ENCODE measurements at regions of chr22 and their contacts with region 1.

Region 1: GRCh38 chr22:45553351-45554039 is 50.8 kb downstream of the FBLN1 start:
- DNase-seq: no peak
- H3K4me3 ChIP-seq: no peak overlapping the region
- H3K27ac ChIP-seq: peak overlapping the region in 7 of 8 donors; percentile 41 to 80 (median 72)
- H3K4me1 ChIP-seq: peaks cover 5 to 41% (median 23%) of the 10 kb centered on the region in 6 donors
- H3K27me3 ChIP-seq: peaks cover 0 to 37% (median 0%) of the 10 kb centered on the region in 7 donors
- CTCF ChIP-seq: peak; percentile 52 to 86 (median 74)
- POLR2A ChIP-seq: no peak

Region 2: DNA sequence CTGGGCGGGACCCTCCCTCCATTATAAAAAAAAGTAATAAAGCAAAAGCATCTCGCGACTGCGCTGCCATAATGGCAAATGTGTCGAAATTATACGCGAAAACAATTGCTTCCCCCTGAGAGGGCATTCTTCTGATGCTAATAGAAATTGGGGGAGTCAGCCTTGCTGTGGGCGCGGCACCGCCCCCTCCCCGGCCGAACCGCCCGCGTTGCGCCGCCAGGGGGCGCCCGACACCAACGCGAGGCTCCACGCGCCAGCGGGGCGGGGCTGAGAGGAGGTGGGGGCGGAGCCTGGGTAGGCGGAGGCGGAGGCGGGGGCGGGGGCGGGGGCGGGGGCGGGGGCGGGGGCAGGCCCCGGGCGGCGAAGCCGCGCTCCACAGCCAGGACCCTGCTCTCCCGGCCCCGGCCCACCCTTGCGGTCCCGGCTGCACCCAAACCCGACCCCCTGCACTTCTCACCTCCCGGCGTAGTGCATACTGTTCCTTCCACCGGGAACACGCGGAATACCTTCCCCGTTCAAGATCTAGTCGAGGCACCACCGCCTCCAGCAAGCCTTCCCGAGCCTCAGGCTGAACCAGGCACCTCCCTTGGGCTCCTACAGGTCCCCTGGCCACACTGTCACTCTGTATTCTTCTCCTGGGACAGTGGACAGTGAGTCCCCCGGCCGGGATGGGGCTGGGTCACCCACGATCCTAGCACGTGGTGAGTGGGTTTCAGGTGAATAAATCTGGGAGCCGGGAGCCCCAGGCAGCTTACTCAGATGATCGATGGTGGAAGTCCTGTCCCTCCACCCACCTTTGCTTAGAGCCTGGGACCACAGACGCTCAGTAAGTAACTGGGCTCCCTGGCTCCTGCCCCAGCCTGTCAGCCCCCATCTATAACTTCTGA is 284.3 kb before region 1 on chr22:
- intact Hi-C with region 1: loop called (anchors 5 kb)
- DNase-seq: peak; percentile 98
- H3K4me3 ChIP-seq: peak overlapping the region; percentile 46 to 74 (median 58)
- H3K27ac ChIP-seq: peak overlapping the region in 3 of 8 donors; percentile 10 to 56 (median 51)
- H3K4me1 ChIP-seq: peaks cover 8 to 37% (median 23%) of the 10 kb centered on the region in 6 donors
- H3K27me3 ChIP-seq: peaks cover 0 to 27% (median 0%) of the 10 kb centered on the region in 7 donors
- CTCF ChIP-seq: peak; percentile 86 to 99 (median 96)
- POLR2A ChIP-seq: no peak

Region 3: DNA sequence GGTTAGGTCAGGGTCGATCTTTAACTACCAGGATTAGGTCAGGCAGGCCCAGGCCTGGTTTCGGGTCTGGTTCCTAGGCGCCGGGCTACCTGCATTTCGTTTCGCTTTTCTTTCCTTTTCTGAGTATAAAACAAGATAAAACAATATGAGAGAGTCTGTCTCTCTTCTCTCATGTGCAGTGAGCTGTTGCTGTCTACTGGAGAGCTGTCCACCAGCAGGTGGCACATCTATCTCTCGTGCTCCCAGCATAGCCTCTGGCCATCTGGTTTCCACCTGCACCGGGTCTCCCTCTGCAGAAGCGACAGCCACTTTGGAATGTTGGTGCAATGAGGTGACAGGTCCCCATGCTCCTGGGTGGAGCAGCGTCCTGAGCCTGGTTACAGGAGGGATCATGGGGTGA is 112.4 kb before region 1 on chr22:
- intact Hi-C with region 1: loop called (anchors 10 kb)
- DNase-seq: no peak
- H3K4me3 ChIP-seq: peak overlapping the region in 1 of 8 donors; percentile 22
- H3K27ac ChIP-seq: no peak overlapping the region
- H3K4me1 ChIP-seq: peaks cover 0 to under 1% (median 0%) of the 10 kb centered on the region in 6 donors
- H3K27me3 ChIP-seq: peaks cover 0 to 9% (median 0%) of the 10 kb centered on the region in 7 donors
- CTCF ChIP-seq: peak in 9 of 11 experiments; percentile 7 to 58 (median 32)
- POLR2A ChIP-seq: no peak

Region 4: GRCh38 chr22:45493286-45493771 is 60.2 kb before region 1 on chr22:
- intact Hi-C with region 1: no loop called
- DNase-seq: peak; percentile 15
- H3K4me3 ChIP-seq: no peak overlapping the region
- H3K27ac ChIP-seq: peak overlapping the region in 3 of 8 donors; percentile 23 to 48 (median 26)
- H3K4me1 ChIP-seq: peaks cover 0 to 7% (median 0%) of the 10 kb centered on the region in 6 donors
- H3K27me3 ChIP-seq: peaks cover 0 to 51% (median 0%) of the 10 kb centered on the region in 7 donors
- CTCF ChIP-seq: no peak
- POLR2A ChIP-seq: no peak

Region 5: GRCh38 chr22:45671768-45672563 is 118.5 kb after region 1 on chr22 and contains the start of gene ATXN10:
- intact Hi-C with region 1: no loop called
- DNase-seq: peak; percentile 91
- H3K4me3 ChIP-seq: peak within 1 kb of the TSS; percentile 66 to 92 (median 84)
- H3K27ac ChIP-seq: peak within 1 kb of the TSS; percentile 72 to 89 (median 84)
- H3K4me1 ChIP-seq: peaks cover 12 to 45% (median 34%) of the 10 kb centered on the region in 6 donors
- H3K27me3 ChIP-seq: no peaks in the 10 kb centered on the region
- CTCF ChIP-seq: no peak
- POLR2A ChIP-seq: no peak
- total RNA-seq, gene ATXN10: 79.1 to 119 (median 87.4) TPM

Region 6: DNA sequence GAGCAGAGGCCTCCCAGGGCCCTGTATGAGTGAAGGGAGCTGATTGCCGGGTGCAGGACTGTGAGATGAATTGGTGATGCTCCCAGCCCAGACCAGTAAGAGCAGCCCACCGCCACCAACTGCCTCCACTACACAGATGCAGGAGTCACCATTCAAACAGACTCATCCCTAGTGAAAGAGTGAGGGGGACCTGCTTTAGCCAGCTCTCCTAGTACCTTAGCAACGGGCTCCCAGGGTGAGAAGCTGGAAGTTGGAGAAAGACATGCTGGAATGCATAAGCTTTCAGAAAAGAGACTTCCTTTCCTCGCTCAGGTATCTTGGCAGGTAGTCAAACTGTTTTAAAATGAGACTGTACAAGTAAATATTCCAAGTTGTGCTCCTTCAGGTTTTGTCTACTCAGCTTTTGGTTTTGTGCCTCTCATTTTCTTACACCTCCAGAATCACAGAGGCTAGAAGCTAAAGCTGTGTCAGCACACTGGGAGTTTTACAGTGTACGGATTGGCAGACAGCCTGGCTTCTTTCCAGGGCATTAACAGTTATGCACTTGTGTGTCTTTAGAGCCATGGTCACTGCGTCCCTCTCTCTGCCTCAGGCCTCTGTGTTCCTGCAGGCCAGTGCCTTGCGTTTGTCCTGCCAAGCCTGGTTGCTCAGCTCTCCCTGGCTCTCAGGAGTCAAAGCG is 264.4 kb after region 1 on chr22:
- intact Hi-C with region 1: no loop called
- DNase-seq: no peak
- H3K4me3 ChIP-seq: no peak overlapping the region
- H3K27ac ChIP-seq: no peak overlapping the region
- H3K4me1 ChIP-seq: peaks cover 0 to 14% (median 5%) of the 10 kb centered on the region in 6 donors
- H3K27me3 ChIP-seq: no peaks in the 10 kb centered on the region
- CTCF ChIP-seq: no peak
- POLR2A ChIP-seq: no peak